Activated CD4-positive, alpha-beta T cell treated with anti-CD3 and anti-CD28 coated beads for 36 hours (primary cell): ENCODE measurements at regions of chrX and their contacts with region 1.

Region 1: DNA sequence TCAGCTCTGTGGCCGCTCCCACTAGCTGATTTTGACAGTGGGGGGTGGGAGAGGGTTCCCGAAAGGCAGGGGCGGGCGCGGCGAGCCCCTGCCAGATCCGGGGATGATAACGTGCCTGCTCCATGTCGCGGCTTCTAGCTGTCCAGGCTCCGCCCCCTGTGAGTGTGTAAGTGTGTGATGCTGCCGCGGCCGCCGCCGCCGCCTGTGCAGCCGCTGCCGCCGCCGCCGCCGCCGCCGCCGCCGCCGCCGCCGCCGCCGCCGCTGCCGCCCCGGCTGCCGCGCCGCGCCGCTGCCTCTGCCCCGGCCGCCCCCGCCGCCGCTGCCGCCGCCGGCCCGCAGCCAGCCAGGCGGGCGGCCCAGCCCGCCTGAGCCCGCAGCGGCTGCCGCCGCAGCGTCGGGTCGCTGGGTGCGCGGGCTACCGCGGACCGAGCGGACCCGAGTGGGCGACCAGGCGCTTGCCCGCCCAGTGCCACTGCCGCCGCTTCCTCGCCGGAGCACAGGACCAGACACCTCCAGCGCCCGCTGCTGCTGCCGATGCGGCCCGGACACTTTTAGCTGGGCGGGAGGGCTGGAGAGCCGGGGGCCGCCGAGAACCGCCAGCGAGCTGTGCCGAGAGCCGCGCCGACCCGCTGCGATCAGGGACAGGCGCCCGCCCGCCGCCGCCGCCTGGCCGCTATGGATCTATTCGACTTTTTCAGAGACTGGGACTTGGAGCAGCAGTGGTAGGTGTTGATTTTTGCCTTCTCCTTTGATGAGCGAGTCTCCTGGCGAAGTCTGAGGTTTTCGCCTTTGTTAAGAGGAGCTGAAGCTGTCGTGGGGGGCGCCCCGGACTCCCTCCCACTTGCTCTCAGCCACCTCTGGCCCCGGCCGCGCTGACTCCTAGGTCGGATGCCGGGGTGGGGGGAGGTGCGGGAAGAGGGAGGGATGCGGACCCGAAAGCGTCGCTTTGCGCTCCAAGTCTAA is at the start of gene AFF2:
- DNase-seq: peak; percentile 71
- ATAC-seq: peak; percentile 80
- H3K4me3 Mint-ChIP-seq: peak within 1 kb of the TSS; percentile 73
- H3K27ac Mint-ChIP-seq: no peak within 1 kb of the TSS
- H3K4me1 Mint-ChIP-seq: peaks cover 14% of the 10 kb centered on the region
- H3K27me3 Mint-ChIP-seq: peaks cover 2% of the 10 kb centered on the region
- total RNA-seq, gene AFF2: 1.3 to 2.2 TPM

Region 2: GRCh38 chrX:146831994-146832393 is 1668.7 kb before region 1 on chrX:
- CTCF ChIA-PET with region 1: no interaction called
- POLR2A ChIA-PET with region 1: no interaction called
- intact Hi-C with region 1: no loop called
- DNase-seq: no peak
- ATAC-seq: no peak
- H3K4me3 Mint-ChIP-seq: no peak overlapping the region
- H3K27ac Mint-ChIP-seq: no peak overlapping the region
- H3K4me1 Mint-ChIP-seq: no peaks in the 10 kb centered on the region
- H3K27me3 Mint-ChIP-seq: no peaks in the 10 kb centered on the region

Region 3: GRCh38 chrX:148109123-148109522 is 391.6 kb before region 1 on chrX:
- CTCF ChIA-PET with region 1: no interaction called
- POLR2A ChIA-PET with region 1: interaction called, 10 read pairs
- intact Hi-C with region 1: no loop called
- DNase-seq: no peak
- ATAC-seq: no peak
- H3K4me3 Mint-ChIP-seq: no peak overlapping the region
- H3K27ac Mint-ChIP-seq: no peak overlapping the region
- H3K4me1 Mint-ChIP-seq: no peaks in the 10 kb centered on the region
- H3K27me3 Mint-ChIP-seq: no peaks in the 10 kb centered on the region